Left cardiac atrium (tissue), 4 donors: ENCODE measurements at regions of chr17 and their contacts with region 1.

Region 1: DNA sequence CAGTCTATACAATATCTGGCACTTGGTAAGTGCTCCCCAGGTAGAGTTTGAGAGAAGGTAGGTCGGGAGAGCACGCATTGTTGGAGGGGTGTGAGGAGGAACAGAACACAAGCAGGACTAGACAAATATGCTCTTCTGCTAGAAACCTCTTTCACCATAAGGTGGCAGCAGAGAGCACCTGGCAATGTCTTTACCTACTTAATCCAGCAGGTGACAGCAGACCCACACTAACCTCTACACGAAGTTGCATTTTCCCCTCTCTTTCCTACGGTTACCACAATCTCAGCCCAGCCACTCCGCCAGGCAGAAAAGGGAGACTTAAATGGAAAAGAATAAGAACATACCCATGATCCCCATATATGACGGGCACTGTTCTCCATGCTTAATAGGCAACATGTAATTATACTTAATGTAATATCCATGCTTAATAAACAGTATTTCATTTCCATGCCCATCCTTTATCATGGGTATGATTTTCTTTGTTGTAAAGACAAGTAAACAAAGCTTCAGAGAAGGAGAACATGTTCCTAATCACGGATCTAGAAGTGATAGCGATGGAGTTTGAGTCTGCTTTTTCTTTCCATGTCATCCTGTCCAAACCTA is 55.1 kb upstream of the CCL2 start:
- DNase-seq: peak; percentile 64
- ATAC-seq: peak; percentile 91 to 94

Region 2: GRCh38 chr17:33786478-33786877 is 413.6 kb before region 1 on chr17:
- intact Hi-C with region 1: no loop called
- DNase-seq: peak; percentile 20
- ATAC-seq: no peak

Region 3: DNA sequence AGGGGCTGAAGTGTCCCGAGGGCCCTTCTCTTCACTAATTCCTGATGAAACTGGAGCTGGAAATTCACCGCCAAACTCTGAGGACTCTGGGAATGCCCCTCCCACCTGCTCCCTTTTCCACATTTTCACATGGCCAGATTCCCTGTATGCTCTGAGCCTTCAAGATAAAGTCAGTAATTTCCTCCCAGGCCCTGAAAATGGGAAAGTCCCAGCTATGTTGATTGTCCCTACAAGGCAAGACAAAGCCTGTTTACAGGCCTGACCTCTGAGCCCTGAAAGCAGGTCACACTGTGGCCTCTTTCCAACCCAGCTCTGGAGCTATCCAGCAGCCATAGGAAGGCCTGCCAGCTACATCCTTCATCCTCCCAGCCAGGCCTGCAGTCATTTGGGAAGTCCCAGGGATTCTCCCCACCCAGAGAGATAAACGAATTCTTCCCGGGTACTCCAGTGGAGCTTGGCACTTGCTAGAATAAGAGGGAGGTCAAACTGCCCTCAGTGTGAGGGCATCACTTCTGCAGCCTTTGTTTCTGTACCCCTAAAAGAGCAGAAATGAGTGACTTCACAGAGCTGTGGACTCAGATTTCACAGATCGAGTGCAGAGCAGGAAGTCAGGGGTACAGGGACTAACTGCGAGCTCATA is 35.5 kb after region 1 on chr17:
- intact Hi-C with region 1: loop called in 1 of 2 experiments (anchors 5 kb)
- DNase-seq: peak; percentile 80
- ATAC-seq: peak; percentile 81 to 82

Region 4: GRCh38 chr17:34254651-34255380 is 54.8 kb after region 1 on chr17 and contains the start of gene CCL2:
- intact Hi-C with region 1: loop called in 1 of 2 experiments (anchors 5 kb)
- DNase-seq: peak; percentile 84
- ATAC-seq: peak; percentile 62 to 74
- total RNA-seq, gene CCL2: 36.8 to 268 TPM

Region 5: DNA sequence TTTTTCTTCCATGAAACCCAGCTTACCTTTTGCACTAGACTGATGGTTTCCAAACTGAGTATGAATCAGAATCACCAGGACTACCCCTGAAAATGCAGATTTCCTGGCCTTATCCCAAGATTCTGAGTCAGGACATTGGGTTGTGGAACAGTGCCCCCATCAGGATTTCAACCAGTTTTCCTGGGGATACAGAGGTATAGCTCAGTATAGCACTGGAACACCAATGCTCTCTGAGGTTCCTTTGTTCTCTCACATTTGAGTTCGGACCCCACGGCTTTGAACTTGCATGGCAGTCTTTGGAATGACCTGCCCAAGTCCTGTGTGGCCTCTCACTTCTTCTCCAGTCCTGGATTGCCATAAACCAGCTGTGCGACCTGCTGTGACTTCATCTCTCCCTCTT is 106.4 kb after region 1 on chr17:
- intact Hi-C with region 1: loop called (anchors 1 to 2 kb)
- DNase-seq: no peak
- ATAC-seq: peak; percentile 80 to 92

Region 6: DNA sequence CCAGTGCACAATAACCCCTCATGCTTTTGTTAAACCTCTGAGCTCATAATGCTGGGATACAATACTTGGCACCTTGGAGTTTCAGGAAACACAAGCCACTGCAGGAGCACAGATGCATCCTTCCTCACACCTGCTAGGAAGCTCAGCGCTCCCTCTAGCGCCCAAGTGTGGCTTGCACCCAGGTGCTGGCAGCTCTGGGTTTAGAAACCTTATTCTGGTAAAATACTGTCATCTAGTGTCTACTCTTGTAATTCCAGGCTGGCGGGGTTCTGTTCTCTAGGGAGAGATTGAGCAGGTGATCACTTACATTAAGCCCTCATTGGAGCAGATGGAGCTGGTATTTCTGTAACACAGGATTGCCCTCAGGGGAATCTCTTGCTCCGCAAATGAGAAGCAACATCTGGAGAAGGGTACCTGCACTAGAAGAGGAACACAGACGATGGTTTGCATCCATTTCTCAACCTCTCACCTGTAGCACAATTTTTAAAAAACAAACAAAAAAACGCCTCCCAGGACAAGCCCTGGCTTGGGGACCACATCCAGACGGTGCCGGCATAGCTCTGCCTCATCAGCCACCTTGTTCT is 161.5 kb after region 1 on chr17:
- intact Hi-C with region 1: loop called (anchors 1 to 2 kb)
- DNase-seq: peak; percentile 90
- ATAC-seq: peak; percentile 91 to 94